Left ventricle myocardium inferior (tissue), 1 donor: ENCODE measurements at regions of chr6 and their contacts with region 1.

Region 1: DNA sequence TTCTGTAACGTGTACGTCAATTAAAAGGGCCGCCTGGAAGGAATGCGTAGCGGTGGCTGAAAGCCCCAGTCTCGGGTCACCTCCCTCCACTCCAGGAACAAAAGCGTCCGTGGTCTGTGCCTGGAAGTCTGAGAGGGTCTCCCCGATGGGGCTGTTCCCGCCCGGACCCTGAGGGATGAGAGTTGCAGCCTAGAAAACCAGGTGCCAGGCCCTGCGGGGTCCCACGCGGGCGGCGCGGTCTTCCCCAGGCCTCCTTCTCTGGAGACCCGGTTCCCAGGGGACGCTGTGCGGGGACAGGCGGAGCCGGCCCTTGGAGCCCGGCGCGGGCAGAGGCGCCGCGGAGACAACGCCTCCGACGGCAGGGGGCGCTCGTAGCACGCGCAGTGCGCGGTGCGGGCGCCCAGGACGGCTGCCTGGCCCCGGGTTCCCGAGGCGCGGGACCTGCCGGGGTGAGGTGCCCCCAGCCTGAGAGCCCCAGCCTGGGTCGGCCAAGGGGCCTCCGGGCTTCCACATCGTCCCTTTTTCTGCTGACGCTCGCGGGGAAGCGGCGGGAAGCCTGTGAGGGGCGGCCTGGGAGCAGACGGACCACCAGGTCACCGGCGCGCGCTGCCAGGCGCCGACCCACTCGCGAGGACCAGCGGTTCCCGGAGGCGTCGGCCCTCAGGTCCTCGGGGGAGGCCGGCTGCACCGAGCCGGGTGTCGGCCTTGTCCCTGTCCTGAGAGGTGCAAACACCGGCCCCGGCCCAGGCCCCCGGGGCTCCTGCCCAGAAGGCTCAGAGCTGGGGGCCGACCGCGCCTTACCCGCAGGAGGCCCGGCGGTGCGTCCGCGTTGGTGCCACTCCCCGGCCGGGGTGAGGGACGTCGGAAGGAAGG is 5.3 kb upstream of the FOXC1 start:
- DNase-seq: no peak
- H3K4me3 ChIP-seq: peak overlapping the region; percentile 65
- H3K27ac ChIP-seq: no peak overlapping the region
- H3K4me1 ChIP-seq: peaks cover 45% of the 10 kb centered on the region
- H3K27me3 ChIP-seq: peaks cover 97% of the 10 kb centered on the region
- CTCF ChIP-seq: peak; percentile 98

Region 2: DNA sequence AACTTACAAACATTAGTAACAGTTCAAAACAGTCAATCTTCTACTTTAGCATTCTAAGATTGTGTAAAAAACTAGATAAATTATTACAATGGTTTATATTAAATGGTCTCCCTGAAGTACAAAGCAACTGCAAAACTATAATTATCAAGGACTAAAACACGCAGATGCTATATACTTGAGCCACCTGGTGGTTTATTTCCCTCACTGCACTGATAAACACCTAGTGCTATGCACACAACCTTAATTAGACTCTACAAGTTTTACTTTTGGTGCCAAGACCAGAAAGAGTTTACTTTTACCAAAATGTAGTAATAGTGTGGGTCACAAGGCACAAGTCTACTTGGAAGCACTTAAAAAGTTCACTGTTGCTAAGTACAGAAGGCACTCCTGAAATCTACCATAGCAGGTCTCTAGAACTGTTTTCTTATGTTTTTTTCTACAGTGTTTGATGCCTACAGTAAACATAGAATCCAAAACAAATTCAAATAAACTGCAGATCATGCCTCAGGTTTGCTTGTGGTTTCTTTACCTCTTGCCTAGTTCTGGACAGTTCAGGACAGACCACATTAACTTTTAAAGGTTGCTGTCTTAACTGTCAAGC is 591.8 kb after region 1 on chr6:
- intact Hi-C with region 1: loop called (anchors 5 kb)
- DNase-seq: no peak
- H3K4me3 ChIP-seq: no peak overlapping the region
- H3K27ac ChIP-seq: no peak overlapping the region
- H3K4me1 ChIP-seq: no peaks in the 10 kb centered on the region
- H3K27me3 ChIP-seq: peaks cover 5% of the 10 kb centered on the region
- CTCF ChIP-seq: peak; percentile 90